ENCODE measurements at regions of chr16 and their contacts with region 1.

Region 1: DNA sequence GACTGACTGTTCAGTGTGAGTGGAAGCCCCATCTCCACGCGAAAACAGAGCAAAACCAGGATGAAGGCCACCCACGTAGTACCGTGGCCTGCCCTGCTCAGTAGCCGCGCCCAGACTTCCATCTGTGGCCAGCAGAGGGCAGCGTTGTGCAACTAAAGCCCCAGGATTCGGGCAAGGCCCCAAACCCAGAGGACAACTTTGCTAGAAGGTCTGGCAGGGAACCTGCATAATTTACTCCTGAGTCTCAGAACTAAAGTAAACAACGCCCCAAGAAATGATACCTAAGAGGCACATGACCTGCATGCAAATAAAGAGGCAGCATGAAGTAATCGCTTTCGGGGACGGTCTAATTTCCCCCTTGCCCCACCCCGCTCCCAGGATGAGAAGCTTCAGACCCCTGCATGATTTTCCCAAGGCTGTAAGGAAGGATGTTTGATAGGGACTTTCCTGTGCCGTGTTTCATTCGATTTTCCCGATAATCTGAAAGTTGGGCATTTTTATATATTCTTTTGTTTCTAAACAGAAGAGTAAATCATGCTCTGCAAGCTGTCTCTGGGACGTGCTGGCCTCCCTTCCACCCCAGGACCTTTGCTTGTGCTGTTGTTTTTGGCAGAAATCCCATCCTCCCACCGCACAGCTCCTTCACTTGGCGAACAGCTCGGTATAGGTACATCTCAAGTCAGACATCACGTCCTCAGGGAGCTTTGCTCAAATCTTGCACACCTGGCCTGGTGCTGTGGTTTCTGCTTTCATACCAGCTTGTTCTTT is 18.6 kb downstream of the HSBP1 start:
- DNase-seq: peak; percentile 70 to 89 (median 82)
- ATAC-seq: peak; percentile 85 to 94 (median 92)
- H3K4me3 ChIP-seq: no peak overlapping the region
- H3K27ac ChIP-seq: no peak overlapping the region
- H3K4me1 ChIP-seq: peaks cover 0 to 5% (median 0%) of the 10 kb centered on the region in 12 donors
- H3K27me3 ChIP-seq: no peaks in the 10 kb centered on the region
- CTCF ChIP-seq: peak; percentile 92 to 96 (median 95)
- POLR2A ChIP-seq: no peak

Region 2: DNA sequence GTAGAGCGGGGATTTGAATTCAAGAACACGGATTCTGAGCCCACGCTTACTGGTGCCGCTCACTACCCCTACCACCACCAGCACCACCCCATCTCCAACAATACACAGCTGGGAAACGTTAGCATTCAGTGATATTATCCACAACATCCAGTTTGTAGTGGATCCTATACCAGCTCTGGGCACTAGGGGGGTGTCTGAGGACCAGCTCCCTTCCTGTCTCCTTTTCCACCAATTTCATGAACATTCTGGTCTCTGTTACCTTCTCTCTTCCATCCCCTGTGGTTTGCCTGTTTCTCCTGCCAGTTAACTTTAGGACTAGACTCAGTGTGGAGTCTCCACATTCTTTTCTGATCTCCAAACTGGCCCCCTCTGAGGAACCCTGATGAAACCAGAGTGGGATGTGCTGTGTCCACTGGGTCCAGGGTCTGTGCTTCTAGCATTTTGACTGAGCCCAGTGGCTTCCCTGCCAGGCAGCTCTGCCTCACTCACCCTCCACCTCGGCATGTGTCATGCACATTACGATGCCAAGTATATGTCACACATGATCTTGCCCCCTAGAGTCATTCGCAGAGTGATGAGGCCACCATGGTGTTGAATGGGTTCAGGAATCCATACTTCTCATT is 1386.5 kb before region 1 on chr16:
- intact Hi-C with region 1: loop called in 1 of 10 experiments (anchors 10 kb)
- DNase-seq: no peak
- ATAC-seq: no peak
- H3K4me3 ChIP-seq: no peak overlapping the region
- H3K27ac ChIP-seq: no peak overlapping the region
- H3K4me1 ChIP-seq: no peaks in the 10 kb centered on the region
- H3K27me3 ChIP-seq: peaks cover 0 to 13% (median 0%) of the 10 kb centered on the region in 9 donors
- CTCF ChIP-seq: peak in 7 of 12 donors; percentile 9 to 32 (median 27)
- POLR2A ChIP-seq: no peak

Region 3: DNA sequence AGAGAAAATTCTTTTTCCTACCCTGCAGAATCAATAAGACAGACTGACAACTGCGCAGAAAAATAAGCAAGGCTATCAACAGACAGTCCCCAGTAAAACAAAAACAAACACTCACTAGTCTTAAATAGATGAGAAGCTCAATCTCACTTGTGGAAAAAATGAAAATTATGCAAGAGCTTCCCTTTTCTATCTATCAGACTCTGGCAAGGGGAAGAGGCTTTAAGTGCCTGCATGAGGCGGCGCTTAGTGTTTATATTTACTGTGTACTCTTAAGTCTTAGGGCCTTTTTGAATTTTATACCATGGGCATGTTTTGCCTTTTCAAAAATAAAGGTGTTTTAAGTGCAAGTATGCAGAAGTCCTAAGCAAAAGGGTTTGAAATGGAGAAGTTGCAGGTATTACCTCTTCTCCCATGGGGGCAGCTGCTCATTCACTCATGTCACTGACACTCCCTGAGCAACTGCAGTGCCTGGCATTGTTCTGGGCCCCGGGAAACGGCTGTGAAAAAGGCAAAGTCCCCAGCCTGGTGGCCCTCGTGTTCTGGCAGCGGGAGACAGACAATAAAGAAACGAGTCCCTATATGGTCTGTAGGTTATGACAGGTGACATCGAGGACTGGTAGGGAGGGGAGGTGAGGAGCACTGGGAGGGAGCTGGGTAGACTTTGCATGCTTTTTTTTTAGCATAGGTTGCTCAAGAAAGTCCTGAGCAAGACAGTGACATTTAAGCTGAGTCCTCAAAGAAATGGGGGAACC is 16.6 kb after region 1 on chr16:
- intact Hi-C with region 1: no loop called
- DNase-seq: no peak
- ATAC-seq: peak in 1 of 4 donors; percentile 29
- H3K4me3 ChIP-seq: no peak overlapping the region
- H3K27ac ChIP-seq: peak overlapping the region in 1 of 12 donors; percentile 33
- H3K4me1 ChIP-seq: peaks cover 0 to 23% (median 0%) of the 10 kb centered on the region in 12 donors
- H3K27me3 ChIP-seq: no peaks in the 10 kb centered on the region
- CTCF ChIP-seq: no peak
- POLR2A ChIP-seq: no peak

Region 4: GRCh38 chr16:83878838-83879237 is 52.5 kb after region 1 on chr16:
- intact Hi-C with region 1: loop called in 9 of 10 experiments (anchors 2 to 5 kb)
- DNase-seq: no peak
- ATAC-seq: no peak
- H3K4me3 ChIP-seq: no peak overlapping the region
- H3K27ac ChIP-seq: no peak overlapping the region
- H3K4me1 ChIP-seq: peaks cover 0 to 3% (median 0%) of the 10 kb centered on the region in 12 donors
- H3K27me3 ChIP-seq: peaks cover 0 to 18% (median 0%) of the 10 kb centered on the region in 9 donors
- CTCF ChIP-seq: peak in 11 of 12 donors; percentile 33 to 68 (median 51)
- POLR2A ChIP-seq: no peak

Region 5: DNA sequence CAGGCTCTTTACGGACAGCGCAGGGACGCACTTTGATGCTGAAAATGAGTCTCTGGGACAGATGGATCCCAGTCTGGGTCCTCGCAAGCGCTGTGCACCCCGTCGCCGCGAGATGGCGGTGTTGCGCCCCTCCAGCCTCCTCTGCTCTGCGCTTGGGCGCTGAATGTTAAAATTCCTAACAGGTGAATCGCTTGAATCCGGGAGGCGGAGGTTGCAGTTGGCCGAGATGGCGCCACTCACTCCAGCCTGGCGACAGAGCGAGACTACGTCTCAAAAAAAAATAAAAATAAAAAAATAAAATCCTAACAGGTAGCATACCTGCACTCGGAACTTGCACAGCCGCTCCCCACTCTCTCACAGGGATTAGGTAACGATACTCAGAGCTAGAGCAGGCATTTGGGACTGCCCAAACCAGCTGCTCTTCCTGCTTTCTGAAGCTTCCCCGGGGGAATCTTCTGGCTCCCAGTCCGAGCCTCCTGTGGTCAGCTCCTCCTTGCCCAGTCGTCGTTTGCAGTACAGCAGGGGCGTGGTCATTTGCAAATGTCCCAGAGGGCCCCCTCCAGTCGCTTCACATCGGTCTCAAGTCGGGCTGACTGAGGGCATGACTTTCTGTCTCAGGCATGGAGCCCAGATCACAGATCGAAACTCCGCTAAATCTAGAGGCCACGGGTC is 100.5 kb after region 1 on chr16:
- intact Hi-C with region 1: loop called in 3 of 10 experiments (anchors 5 to 10 kb)
- DNase-seq: peak; percentile 64 to 84 (median 72)
- ATAC-seq: peak; percentile 62 to 67 (median 64)
- H3K4me3 ChIP-seq: no peak overlapping the region
- H3K27ac ChIP-seq: no peak overlapping the region
- H3K4me1 ChIP-seq: peaks cover 0 to 25% (median 11%) of the 10 kb centered on the region in 12 donors
- H3K27me3 ChIP-seq: no peaks in the 10 kb centered on the region
- CTCF ChIP-seq: peak; percentile 88 to 98 (median 94)
- POLR2A ChIP-seq: no peak

Region 6: GRCh38 chr16:83952940-83953795 is 126.8 kb after region 1 on chr16 and contains the start of gene OSGIN1:
- intact Hi-C with region 1: loop called in 3 of 10 experiments (anchors 1 to 10 kb)
- DNase-seq: peak; percentile 92 to 96 (median 93)
- ATAC-seq: peak; percentile 89 to 94 (median 92)
- H3K4me3 ChIP-seq: peak within 1 kb of the TSS; percentile 36 to 87 (median 63)
- H3K27ac ChIP-seq: peak within 1 kb of the TSS; percentile 64 to 99 (median 94)
- H3K4me1 ChIP-seq: peaks cover 0 to 49% (median 28%) of the 10 kb centered on the region in 12 donors
- H3K27me3 ChIP-seq: no peaks in the 10 kb centered on the region
- CTCF ChIP-seq: no peak
- POLR2A ChIP-seq: peak; percentile 48 to 94
- total RNA-seq, gene OSGIN1: 3.3 to 11.0 (median 7.0) TPM

Region 7: GRCh38 chr16:84062734-84063640 is 236.7 kb after region 1 on chr16:
- intact Hi-C with region 1: loop called in 9 of 10 experiments (anchors 2 to 10 kb)
- DNase-seq: peak; percentile 73 to 85 (median 80)
- ATAC-seq: peak; percentile 60 to 85 (median 85)
- H3K4me3 ChIP-seq: no peak overlapping the region
- H3K27ac ChIP-seq: peak overlapping the region in 5 of 12 donors; percentile 11 to 46 (median 31)
- H3K4me1 ChIP-seq: peaks cover 0 to 24% (median 12%) of the 10 kb centered on the region in 12 donors
- H3K27me3 ChIP-seq: no peaks in the 10 kb centered on the region
- CTCF ChIP-seq: peak; percentile 74 to 93 (median 88)
- POLR2A ChIP-seq: no peak

Region 8: DNA sequence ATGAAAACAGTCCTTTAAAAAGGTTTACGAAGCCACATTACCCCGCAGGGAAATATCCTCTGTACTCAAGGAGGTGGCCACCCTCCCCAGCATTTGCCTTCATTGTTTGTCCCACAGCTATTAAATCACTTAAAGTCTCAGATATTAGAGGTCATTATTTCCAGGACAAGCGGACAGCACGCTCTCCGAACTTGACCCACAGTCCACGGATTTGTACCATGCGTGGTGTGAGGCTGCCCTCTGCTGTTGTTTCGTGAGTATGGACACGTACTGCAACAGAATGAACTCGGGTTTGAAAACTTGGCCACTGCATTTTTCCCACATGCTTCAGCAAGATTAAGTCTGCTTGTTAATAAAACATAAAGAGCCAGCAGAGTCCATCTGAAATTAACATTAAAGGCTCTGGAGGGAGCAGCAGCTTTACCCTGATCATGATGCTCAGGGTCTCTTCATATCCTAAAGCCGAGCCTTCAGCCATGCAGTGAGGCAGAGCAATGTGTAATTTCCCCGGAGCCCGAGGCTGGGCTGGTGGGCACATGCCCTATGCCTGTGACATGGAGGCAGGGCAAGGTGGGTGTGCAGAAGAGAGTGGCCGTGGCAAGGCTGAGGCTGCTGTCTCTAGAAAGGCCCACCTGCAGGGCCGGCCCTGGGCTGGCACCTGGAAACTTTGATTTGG is 658.4 kb after region 1 on chr16:
- intact Hi-C with region 1: loop called in 4 of 10 experiments (anchors 10 kb)
- DNase-seq: peak; percentile 53 to 77 (median 67)
- ATAC-seq: peak in 3 of 4 donors; percentile 79 to 89 (median 83)
- H3K4me3 ChIP-seq: no peak overlapping the region
- H3K27ac ChIP-seq: no peak overlapping the region
- H3K4me1 ChIP-seq: peaks cover 0 to 8% (median 0%) of the 10 kb centered on the region in 12 donors
- H3K27me3 ChIP-seq: no peaks in the 10 kb centered on the region
- CTCF ChIP-seq: peak; percentile 69 to 87 (median 83)
- POLR2A ChIP-seq: no peak